CD4-positive, alpha-beta memory T cell (primary cell): ENCODE measurements at regions of chr10 and their contacts with region 1.

Region 1: GRCh38 chr10:68023292-68023691 is 51.8 kb downstream of the HERC4 start:
- DNase-seq: no peak
- H3K4me3 ChIP-seq: no peak overlapping the region
- H3K4me3 Mint-ChIP-seq: no peak overlapping the region
- H3K27ac ChIP-seq: no peak overlapping the region
- H3K27ac Mint-ChIP-seq: peak overlapping the region in 1 of 7 donors; percentile 1
- H3K4me1 ChIP-seq: no peaks in the 10 kb centered on the region
- H3K4me1 Mint-ChIP-seq: peaks cover 4 to 13% (median 9%) of the 10 kb centered on the region in 4 donors
- H3K27me3 ChIP-seq: no peaks in the 10 kb centered on the region
- H3K27me3 Mint-ChIP-seq: no peaks in the 10 kb centered on the region

Region 2: GRCh38 chr10:68043030-68043429 is 19.7 kb after region 1 on chr10:
- CTCF ChIA-PET with region 1: interaction called, 3 read pairs
- POLR2A ChIA-PET with region 1: no interaction called
- intact Hi-C with region 1: loop called (anchors 2 kb)
- DNase-seq: no peak
- H3K4me3 ChIP-seq: no peak overlapping the region
- H3K4me3 Mint-ChIP-seq: no peak overlapping the region
- H3K27ac ChIP-seq: no peak overlapping the region
- H3K27ac Mint-ChIP-seq: peak overlapping the region in 2 of 7 donors; percentile 8 to 27
- H3K4me1 ChIP-seq: no peaks in the 10 kb centered on the region
- H3K4me1 Mint-ChIP-seq: peaks cover 20 to 32% (median 22%) of the 10 kb centered on the region in 4 donors
- H3K27me3 ChIP-seq: no peaks in the 10 kb centered on the region
- H3K27me3 Mint-ChIP-seq: no peaks in the 10 kb centered on the region

Region 3: GRCh38 chr10:68053553-68053952 is 30.3 kb after region 1 on chr10:
- CTCF ChIA-PET with region 1: no interaction called
- POLR2A ChIA-PET with region 1: no interaction called
- intact Hi-C with region 1: no loop called
- DNase-seq: no peak
- H3K4me3 ChIP-seq: no peak overlapping the region
- H3K4me3 Mint-ChIP-seq: no peak overlapping the region
- H3K27ac ChIP-seq: no peak overlapping the region
- H3K27ac Mint-ChIP-seq: peak overlapping the region in 1 of 7 donors; percentile 71
- H3K4me1 ChIP-seq: peaks cover 15% of the 10 kb centered on the region
- H3K4me1 Mint-ChIP-seq: peaks cover 28 to 42% (median 32%) of the 10 kb centered on the region in 4 donors
- H3K27me3 ChIP-seq: no peaks in the 10 kb centered on the region
- H3K27me3 Mint-ChIP-seq: no peaks in the 10 kb centered on the region

Region 4: GRCh38 chr10:68074775-68075549 is 51.7 kb after region 1 on chr10 and contains the start of gene HERC4:
- CTCF ChIA-PET with region 1: no interaction called
- POLR2A ChIA-PET with region 1: no interaction called
- intact Hi-C with region 1: no loop called
- DNase-seq: peak; percentile 88 to 92 (median 89)
- H3K4me3 ChIP-seq: peak within 1 kb of the TSS; percentile 53 to 99
- H3K4me3 Mint-ChIP-seq: peak within 1 kb of the TSS; percentile 95 to 99 (median 98)
- H3K27ac ChIP-seq: peak within 1 kb of the TSS; percentile 98
- H3K27ac Mint-ChIP-seq: peak within 1 kb of the TSS; percentile 91 to 98 (median 95)
- H3K4me1 ChIP-seq: peaks cover 39% of the 10 kb centered on the region
- H3K4me1 Mint-ChIP-seq: peaks cover 30 to 48% (median 39%) of the 10 kb centered on the region in 4 donors
- H3K27me3 ChIP-seq: no peaks in the 10 kb centered on the region
- H3K27me3 Mint-ChIP-seq: no peaks in the 10 kb centered on the region
- total RNA-seq, gene HERC4: 104 to 117 TPM

Region 5: DNA sequence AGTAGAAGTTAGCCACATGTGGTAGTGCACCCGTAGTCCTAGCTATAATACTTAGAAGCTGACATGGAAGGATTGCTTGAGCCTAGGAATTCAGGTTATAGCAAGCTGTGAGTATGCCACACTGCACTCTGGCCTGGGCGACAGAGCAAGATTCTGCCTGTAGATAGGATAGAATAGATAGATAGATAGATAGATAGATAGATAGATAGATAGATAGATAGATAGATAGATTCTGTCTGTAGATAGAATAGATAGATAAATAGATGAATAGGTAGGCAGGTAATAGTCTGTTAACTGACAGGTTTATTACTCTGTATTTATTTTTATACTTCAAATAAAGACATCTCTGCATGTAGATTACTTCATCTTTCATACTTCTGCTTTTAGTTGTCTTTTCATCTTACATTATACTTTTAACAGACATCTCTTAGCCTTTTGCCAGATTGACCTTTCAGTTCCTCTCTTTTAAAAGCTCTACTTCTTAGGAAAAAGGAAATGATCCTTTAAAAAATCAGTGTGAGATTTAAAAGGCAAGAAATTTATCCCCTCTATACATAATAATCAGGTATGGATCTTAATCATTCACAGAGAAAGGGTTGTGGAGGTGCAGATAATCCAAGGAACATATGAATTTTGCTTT is 729.5 kb after region 1 on chr10:
- CTCF ChIA-PET with region 1: no interaction called
- POLR2A ChIA-PET with region 1: no interaction called
- intact Hi-C with region 1: no loop called
- DNase-seq: no peak
- H3K4me3 ChIP-seq: no peak overlapping the region
- H3K4me3 Mint-ChIP-seq: no peak overlapping the region
- H3K27ac ChIP-seq: no peak overlapping the region
- H3K27ac Mint-ChIP-seq: peak overlapping the region in 2 of 7 donors; percentile 15 to 46
- H3K4me1 ChIP-seq: no peaks in the 10 kb centered on the region
- H3K4me1 Mint-ChIP-seq: no peaks in the 10 kb centered on the region
- H3K27me3 ChIP-seq: no peaks in the 10 kb centered on the region
- H3K27me3 Mint-ChIP-seq: no peaks in the 10 kb centered on the region